IMR-90 (cell line): ENCODE measurements at regions of chr18 and their contacts with region 1.

Region 1: GRCh38 chr18:63444567-63444966 is 22.3 kb upstream of the VPS4B start:
- DNase-seq: peak; percentile 72
- ATAC-seq: peak; percentile 11; the same call in 1 of the 2 replicates
- H3K4me3 ChIP-seq: no peak overlapping the region
- H3K27ac ChIP-seq: no peak overlapping the region
- H3K4me1 ChIP-seq: no peaks in the 10 kb centered on the region
- H3K27me3 ChIP-seq: 0 out of 2 replicates have a peak, but pooled peaks cover 2% of the 10 kb centered on the region
- CTCF ChIP-seq: no peak
- POLR2A ChIP-seq: no peak
- RAD21 ChIP-seq: no peak

Region 2: GRCh38 chr18:63131106-63131958 is 313.2 kb before region 1 on chr18:
- CTCF ChIA-PET with region 1: interaction called, 5 read pairs
- POLR2A ChIA-PET with region 1: no interaction called
- dilution Hi-C with region 1: no loop called
- in situ Hi-C with region 1: loop called (anchors 5 kb)
- intact Hi-C with region 1: loop called (anchors 2 kb)
- DNase-seq: peak; percentile 59
- ATAC-seq: peak; percentile 81
- H3K4me3 ChIP-seq: no peak overlapping the region
- H3K27ac ChIP-seq: no peak overlapping the region
- H3K4me1 ChIP-seq: no peaks in the 10 kb centered on the region
- H3K27me3 ChIP-seq: peaks cover 14% of the 10 kb centered on the region
- CTCF ChIP-seq: peak; percentile 75
- POLR2A ChIP-seq: no peak
- RAD21 ChIP-seq: peak; percentile 71

Region 3: GRCh38 chr18:63177919-63178821 is 266.4 kb before region 1 on chr18:
- CTCF ChIA-PET with region 1: no interaction called
- POLR2A ChIA-PET with region 1: no interaction called
- dilution Hi-C with region 1: no loop called
- in situ Hi-C with region 1: no loop called
- intact Hi-C with region 1: no loop called
- DNase-seq: no peak
- ATAC-seq: no peak
- H3K4me3 ChIP-seq: no peak overlapping the region
- H3K27ac ChIP-seq: no peak overlapping the region
- H3K4me1 ChIP-seq: no peaks in the 10 kb centered on the region; the same call in 1 of the 2 replicates
- H3K27me3 ChIP-seq: peaks cover 39% of the 10 kb centered on the region
- CTCF ChIP-seq: no peak
- POLR2A ChIP-seq: no peak
- RAD21 ChIP-seq: no peak